GM12878 (cell line): ENCODE measurements at regions of chr11 and their contacts with region 1.

Region 1: GRCh38 chr11:123707606-123708205 is 33.8 kb downstream of the ZNF202 start:
- DNase-seq: peak; percentile 30
- ATAC-seq: peak; percentile 90
- H3K4me3 ChIP-seq: no peak overlapping the region
- H3K27ac ChIP-seq: no peak overlapping the region
- H3K4me1 ChIP-seq: no peaks in the 10 kb centered on the region
- H3K27me3 ChIP-seq: peaks cover 0 to 2% of the 10 kb centered on the region in 2 experiments; a peak in 1 of 4 replicates
- CTCF ChIP-seq: peak; percentile 63 to 82 (median 70)
- EP300 ChIP-seq: no peak
- POLR2A ChIP-seq: no peak
- RAD21 ChIP-seq: peak; percentile 87

Region 2: GRCh38 chr11:123103326-123103980 is 604.3 kb before region 1 on chr11:
- CTCF ChIA-PET with region 1: interaction called, 4 read pairs
- POLR2A ChIA-PET with region 1: interaction called, 3 read pairs
- RAD21 ChIA-PET with region 1: interaction called, 6 read pairs
- SMC1A ChIA-PET with region 1: interaction called, 3 read pairs
- in situ Hi-C with region 1: no loop called
- intact Hi-C with region 1: loop called (anchors 10 kb)
- DNase-seq: no peak
- ATAC-seq: peak; percentile 82
- H3K4me3 ChIP-seq: no peak overlapping the region
- H3K27ac ChIP-seq: no peak overlapping the region
- H3K4me1 ChIP-seq: no peaks in the 10 kb centered on the region
- H3K27me3 ChIP-seq: peaks cover 0 to 2% of the 10 kb centered on the region in 2 experiments; a peak in 1 of 4 replicates
- CTCF ChIP-seq: peak; percentile 49 to 59 (median 58); a peak in 5 of 6 replicates
- EP300 ChIP-seq: no peak
- POLR2A ChIP-seq: no peak
- RAD21 ChIP-seq: peak; percentile 66

Region 3: DNA sequence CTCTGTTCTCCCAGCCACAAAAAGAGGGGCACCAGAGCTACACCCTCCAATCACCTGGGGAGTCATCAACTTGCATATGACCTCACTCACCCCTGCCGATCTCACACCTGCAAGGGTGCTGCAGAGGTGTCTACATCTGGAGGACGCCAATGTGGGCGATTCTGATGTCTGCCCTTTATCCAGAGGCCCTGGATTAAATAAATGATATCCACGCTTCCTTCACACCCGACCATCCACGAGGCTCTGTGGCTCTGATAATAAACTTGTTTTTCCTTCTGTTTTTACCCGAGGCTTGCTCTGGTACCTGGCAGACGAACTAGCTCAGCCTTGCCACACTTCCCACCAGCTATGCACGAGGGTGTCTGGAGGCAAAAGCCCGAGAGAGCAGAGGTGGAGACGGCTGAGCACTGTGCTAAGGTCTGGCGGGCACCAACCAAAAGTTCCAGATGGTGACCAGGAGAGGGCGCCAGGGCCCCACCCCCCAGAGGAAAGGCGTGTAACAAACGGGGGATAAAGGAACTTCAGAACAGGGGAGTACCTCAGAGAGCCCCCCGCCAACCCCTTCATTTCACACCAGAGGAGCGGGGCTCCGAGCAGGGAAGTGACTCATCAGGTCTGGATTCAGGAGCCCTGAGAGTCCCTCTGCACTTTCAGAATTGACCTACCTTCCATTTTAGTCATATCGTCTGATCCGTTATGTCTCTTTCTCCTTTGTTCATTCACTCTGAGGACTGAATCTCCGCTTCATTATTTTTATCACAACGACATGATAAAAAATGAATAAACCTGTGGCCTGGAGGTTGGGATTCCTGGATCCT is 66.8 kb before region 1 on chr11:
- CTCF ChIA-PET with region 1: interaction called, 213 read pairs
- POLR2A ChIA-PET with region 1: interaction called, 4 read pairs
- RAD21 ChIA-PET with region 1: interaction called, 43 read pairs
- SMC1A ChIA-PET with region 1: interaction called, 26 read pairs
- in situ Hi-C with region 1: no loop called
- intact Hi-C with region 1: loop called (anchors 1 kb)
- DNase-seq: no peak
- ATAC-seq: peak; percentile 97
- H3K4me3 ChIP-seq: no peak overlapping the region
- H3K27ac ChIP-seq: no peak overlapping the region
- H3K4me1 ChIP-seq: no peaks in the 10 kb centered on the region
- H3K27me3 ChIP-seq: peaks cover 0 to 2% of the 10 kb centered on the region in 2 experiments; a peak in 2 of 4 replicates
- CTCF ChIP-seq: peak; percentile 77 to 82 (median 80)
- EP300 ChIP-seq: no peak
- POLR2A ChIP-seq: no peak
- RAD21 ChIP-seq: peak; percentile 90

Region 4: GRCh38 chr11:123652599-123652998 is 55.1 kb before region 1 on chr11:
- CTCF ChIA-PET with region 1: interaction called, 19 read pairs
- POLR2A ChIA-PET with region 1: no interaction called
- RAD21 ChIA-PET with region 1: interaction called, 6 read pairs
- SMC1A ChIA-PET with region 1: interaction called, 9 read pairs
- in situ Hi-C with region 1: no loop called
- intact Hi-C with region 1: no loop called
- DNase-seq: no peak
- ATAC-seq: no peak
- H3K4me3 ChIP-seq: no peak overlapping the region
- H3K27ac ChIP-seq: no peak overlapping the region
- H3K4me1 ChIP-seq: no peaks in the 10 kb centered on the region
- H3K27me3 ChIP-seq: peaks cover 6 to 10% of the 10 kb centered on the region in 2 experiments
- CTCF ChIP-seq: no peak
- EP300 ChIP-seq: no peak
- POLR2A ChIP-seq: no peak
- RAD21 ChIP-seq: no peak

Region 5: DNA sequence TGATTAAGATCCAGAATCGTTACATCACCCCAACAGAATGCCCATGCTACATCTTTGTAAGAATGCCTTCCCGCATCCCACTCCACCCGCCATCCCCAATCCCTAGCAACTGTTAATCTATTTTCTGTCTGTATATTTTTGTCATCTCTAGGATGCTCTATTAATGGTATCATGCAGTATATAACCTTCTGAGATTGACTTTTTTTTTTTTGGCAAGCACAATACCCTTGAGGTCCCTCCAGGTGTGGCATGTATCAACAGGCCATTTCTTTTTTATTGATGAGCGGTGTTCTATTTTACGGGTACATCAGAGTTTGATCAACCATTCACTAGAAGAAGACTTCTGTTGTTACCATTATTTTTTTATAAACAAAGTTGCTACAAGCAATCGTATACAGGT is 23.1 kb before region 1 on chr11:
- CTCF ChIA-PET with region 1: interaction called, 17 read pairs
- POLR2A ChIA-PET with region 1: no interaction called
- RAD21 ChIA-PET with region 1: no interaction called
- SMC1A ChIA-PET with region 1: interaction called, 3 read pairs
- in situ Hi-C with region 1: no loop called
- intact Hi-C with region 1: no loop called
- DNase-seq: no peak
- ATAC-seq: no peak
- H3K4me3 ChIP-seq: no peak overlapping the region
- H3K27ac ChIP-seq: no peak overlapping the region
- H3K4me1 ChIP-seq: no peaks in the 10 kb centered on the region
- H3K27me3 ChIP-seq: peaks cover 2 to 3% of the 10 kb centered on the region in 2 experiments; a peak in 1 of 4 replicates
- CTCF ChIP-seq: no peak
- EP300 ChIP-seq: no peak
- POLR2A ChIP-seq: no peak
- RAD21 ChIP-seq: no peak

Region 6: DNA sequence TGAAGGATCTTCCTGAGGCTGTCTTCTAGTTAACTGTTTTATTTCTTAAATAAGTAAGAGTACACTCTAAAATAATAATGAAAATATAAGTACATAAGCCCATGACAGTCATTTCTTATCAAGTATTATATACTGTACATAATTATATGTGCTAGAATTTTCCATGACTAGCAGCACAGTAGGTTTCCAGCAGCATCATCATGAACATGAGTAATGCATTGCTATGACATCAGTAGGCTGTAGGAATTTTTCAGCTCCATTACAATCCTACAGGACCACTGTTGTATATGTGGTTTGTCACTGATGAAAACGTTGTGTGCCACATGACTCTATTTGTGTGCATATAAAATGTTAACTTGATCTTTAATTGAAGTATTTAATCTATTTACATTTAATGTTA is 11.7 kb after region 1 on chr11:
- CTCF ChIA-PET with region 1: interaction called, 82 read pairs
- POLR2A ChIA-PET with region 1: no interaction called
- RAD21 ChIA-PET with region 1: interaction called, 3 read pairs
- SMC1A ChIA-PET with region 1: interaction called, 9 read pairs
- in situ Hi-C with region 1: no loop called
- intact Hi-C with region 1: no loop called
- DNase-seq: no peak
- ATAC-seq: no peak
- H3K4me3 ChIP-seq: no peak overlapping the region
- H3K27ac ChIP-seq: no peak overlapping the region
- H3K4me1 ChIP-seq: no peaks in the 10 kb centered on the region
- H3K27me3 ChIP-seq: no peaks in the 10 kb centered on the region
- CTCF ChIP-seq: no peak
- EP300 ChIP-seq: no peak
- POLR2A ChIP-seq: no peak
- RAD21 ChIP-seq: no peak

Region 7: DNA sequence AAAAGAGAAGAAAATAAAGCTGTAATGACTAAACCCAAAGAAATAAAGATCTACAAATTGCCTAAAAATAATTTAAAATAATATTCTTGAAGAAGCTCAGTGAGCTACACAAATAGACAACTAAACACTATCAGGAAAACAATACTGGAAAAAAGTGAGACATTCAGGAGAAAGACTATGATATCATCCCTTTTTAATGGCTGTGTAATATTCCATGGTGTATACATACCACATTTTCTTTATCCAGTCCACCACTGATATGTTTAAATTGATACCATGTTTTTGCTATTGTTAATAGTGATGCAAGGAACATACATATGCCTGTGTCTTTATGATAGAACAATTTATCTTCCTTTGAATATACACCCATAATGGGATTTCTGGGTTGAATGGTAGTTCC is 249.0 kb after region 1 on chr11:
- CTCF ChIA-PET with region 1: no interaction called
- POLR2A ChIA-PET with region 1: no interaction called
- RAD21 ChIA-PET with region 1: no interaction called
- SMC1A ChIA-PET with region 1: no interaction called
- in situ Hi-C with region 1: no loop called
- intact Hi-C with region 1: no loop called
- DNase-seq: no peak
- ATAC-seq: no peak
- H3K4me3 ChIP-seq: no peak overlapping the region
- H3K27ac ChIP-seq: no peak overlapping the region
- H3K4me1 ChIP-seq: no peaks in the 10 kb centered on the region
- H3K27me3 ChIP-seq: no peaks in the 10 kb centered on the region
- CTCF ChIP-seq: no peak
- EP300 ChIP-seq: no peak
- POLR2A ChIP-seq: no peak
- RAD21 ChIP-seq: no peak